ENCODE measurements at regions of chr5 and their contacts with region 1.

Region 1: DNA sequence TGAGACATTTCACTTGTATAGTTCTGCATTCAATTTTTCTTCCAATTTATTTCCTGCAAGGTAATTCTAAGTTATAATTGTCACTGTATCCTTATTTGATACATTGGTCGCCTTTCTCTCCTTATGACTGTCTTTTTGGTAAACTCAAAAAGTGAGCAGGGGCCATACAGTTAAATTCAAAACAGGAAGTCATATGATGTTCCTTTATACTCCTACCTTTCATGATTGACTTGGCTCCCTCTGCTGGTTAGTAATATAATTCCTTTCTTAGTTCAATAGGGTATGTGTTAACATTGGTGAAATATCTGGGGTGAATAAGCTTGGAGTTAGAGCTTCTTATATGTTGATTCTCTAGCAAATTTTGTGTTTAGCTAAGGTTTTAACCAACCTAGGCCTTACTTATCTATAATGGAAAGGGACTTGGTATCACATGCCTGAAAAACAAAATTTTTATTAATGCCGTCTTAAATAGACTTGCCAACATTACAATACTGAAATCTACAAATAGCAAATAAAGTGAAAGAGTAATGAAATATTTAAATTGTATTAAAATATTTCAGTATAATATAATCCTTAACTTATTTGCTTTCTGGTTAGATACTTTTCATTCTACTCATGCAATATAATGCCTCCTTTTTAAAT is 6.0 kb upstream of the NIPBL start:
- DNase-seq: peak in 1 of 2 donors; percentile 82
- ATAC-seq: peak; percentile 84 to 88 (median 87)
- H3K4me3 ChIP-seq: no peak overlapping the region
- H3K4me3 Mint-ChIP-seq: no peak overlapping the region
- H3K27ac ChIP-seq: no peak overlapping the region
- H3K27ac Mint-ChIP-seq: peak overlapping the region in 1 of 2 donors; percentile 52
- H3K4me1 ChIP-seq: peaks cover 9% of the 10 kb centered on the region
- H3K4me1 Mint-ChIP-seq: peaks cover 18 to 19% of the 10 kb centered on the region in 2 donors
- H3K27me3 ChIP-seq: no peaks in the 10 kb centered on the region
- H3K27me3 Mint-ChIP-seq: no peaks in the 10 kb centered on the region
- CTCF ChIP-seq: peak; percentile 85

Region 2: DNA sequence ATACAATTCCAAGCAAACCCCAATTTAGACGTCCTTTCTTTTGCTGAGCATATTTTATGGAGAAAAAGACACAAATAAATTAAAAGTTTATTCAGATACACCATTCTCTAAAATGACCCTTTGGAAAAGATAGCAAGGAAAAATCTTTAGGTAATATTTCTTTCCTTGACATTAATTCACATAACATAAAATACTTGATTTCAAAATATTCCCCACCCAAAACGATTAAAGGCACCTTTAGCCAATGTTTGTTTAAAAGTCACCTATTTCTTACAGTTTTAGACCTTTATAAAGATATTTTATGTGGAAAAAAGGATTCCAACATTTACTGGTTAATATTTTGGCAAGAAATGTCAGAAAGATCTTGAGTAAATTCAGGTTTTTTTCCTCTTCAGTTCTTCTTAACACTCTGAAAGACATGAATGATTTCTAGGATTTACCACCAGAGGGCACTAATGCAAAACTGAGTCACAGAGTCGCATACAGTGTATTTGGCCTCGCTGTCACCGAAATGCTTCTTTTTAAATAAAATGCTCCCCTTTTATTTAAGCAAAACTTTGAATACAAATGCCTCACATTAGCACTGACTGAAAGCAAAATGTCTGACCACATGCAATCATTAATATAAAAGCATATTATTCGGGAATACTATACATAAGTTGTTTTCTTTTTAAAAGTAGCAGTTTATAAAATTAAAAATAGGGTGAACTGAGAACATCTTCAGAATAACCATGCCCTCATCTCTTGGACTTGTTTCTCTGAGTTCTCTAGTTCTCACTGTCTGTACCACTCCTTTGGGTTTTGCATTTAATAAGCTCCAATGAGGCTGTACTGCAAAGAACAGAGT is 141.6 kb before region 1 on chr5:
- intact Hi-C with region 1: loop called (anchors 1 kb)
- DNase-seq: peak in 1 of 2 donors; percentile 77
- ATAC-seq: peak; percentile 43 to 56 (median 51)
- H3K4me3 ChIP-seq: no peak overlapping the region
- H3K4me3 Mint-ChIP-seq: no peak overlapping the region
- H3K27ac ChIP-seq: no peak overlapping the region
- H3K27ac Mint-ChIP-seq: no peak overlapping the region
- H3K4me1 ChIP-seq: peaks cover 13% of the 10 kb centered on the region
- H3K4me1 Mint-ChIP-seq: peaks cover 14 to 19% of the 10 kb centered on the region in 2 donors
- H3K27me3 ChIP-seq: no peaks in the 10 kb centered on the region
- H3K27me3 Mint-ChIP-seq: no peaks in the 10 kb centered on the region
- CTCF ChIP-seq: peak; percentile 78

Region 3: GRCh38 chr5:36739751-36740221 is 130.7 kb before region 1 on chr5:
- intact Hi-C with region 1: loop called (anchors 1 kb)
- DNase-seq: peak; percentile 65 to 80
- ATAC-seq: peak; percentile 82 to 97 (median 93)
- H3K4me3 ChIP-seq: no peak overlapping the region
- H3K4me3 Mint-ChIP-seq: no peak overlapping the region
- H3K27ac ChIP-seq: no peak overlapping the region
- H3K27ac Mint-ChIP-seq: no peak overlapping the region
- H3K4me1 ChIP-seq: peaks cover 6% of the 10 kb centered on the region
- H3K4me1 Mint-ChIP-seq: peaks cover under 1 to 7% of the 10 kb centered on the region in 2 donors
- H3K27me3 ChIP-seq: no peaks in the 10 kb centered on the region
- H3K27me3 Mint-ChIP-seq: peaks cover 24 to 36% of the 10 kb centered on the region in 2 donors
- CTCF ChIP-seq: peak; percentile 67

Measured in natural killer cell (primary cell).